Right lobe of liver (tissue), 6 donors: ENCODE measurements at regions of chr18 and their contacts with region 1.

Region 1: DNA sequence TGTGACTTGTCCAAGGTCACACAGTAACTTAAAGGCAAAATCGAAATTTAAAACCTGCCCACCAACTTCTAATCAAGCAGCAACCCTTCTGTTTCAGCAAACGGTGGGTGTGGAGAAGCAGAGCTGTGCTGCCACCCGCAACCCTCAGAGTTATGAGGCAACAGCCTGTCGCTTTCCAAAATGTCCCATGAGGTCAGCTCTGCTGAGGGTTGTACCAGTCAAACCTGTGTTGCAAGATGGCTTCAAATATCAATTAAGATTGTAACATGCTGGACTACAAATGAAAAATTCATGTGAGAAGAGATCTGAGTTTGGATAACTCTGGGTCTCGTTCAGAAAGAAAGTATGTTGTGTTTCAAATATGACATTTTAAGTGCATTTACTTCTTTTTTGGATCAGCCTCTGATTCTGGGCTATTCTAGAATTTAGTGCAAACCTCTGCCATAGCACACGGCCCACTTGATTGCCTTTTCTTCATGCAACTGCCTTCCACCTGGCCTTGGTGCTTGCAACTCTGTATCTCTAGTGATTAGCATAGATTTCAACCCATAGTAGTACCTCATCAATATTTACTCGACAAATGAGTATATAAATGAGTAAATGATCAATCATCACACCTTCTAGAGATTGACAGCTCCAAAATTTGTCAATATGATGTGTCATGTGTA is 69.3 kb downstream of the TIMM21 start:
- DNase-seq: peak; percentile 57 to 91 (median 85)
- ATAC-seq: peak; percentile 80 to 92 (median 88)
- H3K4me3 ChIP-seq: peak overlapping the region in 1 of 3 donors; percentile 3
- H3K27ac ChIP-seq: peak overlapping the region; percentile 70 to 94 (median 77)
- H3K4me1 ChIP-seq: peaks cover 0 to 29% (median 12%) of the 10 kb centered on the region in 4 donors
- H3K27me3 ChIP-seq: no peaks in the 10 kb centered on the region
- CTCF ChIP-seq: no peak
- POLR2A ChIP-seq: peak; percentile 36

Region 2: DNA sequence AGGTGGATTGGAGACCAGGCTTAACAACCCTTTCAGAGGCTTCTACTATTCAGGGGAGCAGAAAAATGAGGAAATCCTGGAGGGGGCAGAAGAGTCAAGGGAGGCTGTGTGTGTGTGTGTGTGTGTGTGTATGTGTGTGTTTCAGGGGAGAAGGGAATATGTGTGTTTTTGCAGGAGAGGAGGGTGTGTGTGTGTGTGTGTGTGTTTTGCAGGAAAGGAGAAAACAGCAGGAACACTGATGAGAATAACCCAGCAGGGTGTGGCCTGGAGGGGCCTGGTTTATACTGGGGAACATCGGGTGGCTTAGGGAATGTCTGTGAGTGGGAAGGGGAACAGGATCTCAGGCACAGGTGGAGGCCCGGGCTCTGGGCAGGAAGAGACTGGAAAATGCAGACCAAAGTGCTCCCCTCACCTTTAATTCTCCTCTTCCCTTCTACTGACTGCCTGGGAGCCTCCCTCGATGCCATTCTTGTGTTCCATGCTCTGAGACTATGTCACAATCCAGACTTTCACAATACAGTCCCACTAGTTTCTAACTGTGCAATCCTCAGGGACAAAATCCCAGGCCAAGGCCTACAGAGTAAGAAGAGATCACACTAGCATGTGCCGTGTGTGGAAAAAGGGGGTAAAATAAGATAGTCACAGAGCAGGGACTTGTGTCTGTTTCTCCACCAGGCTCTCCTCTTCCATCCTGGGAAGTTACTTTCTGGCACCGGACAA is 64.2 kb after region 1 on chr18:
- intact Hi-C with region 1: loop called in 1 of 2 experiments (anchors 10 kb)
- DNase-seq: no peak
- ATAC-seq: peak; percentile 21 to 67 (median 43)
- H3K4me3 ChIP-seq: peak overlapping the region in 2 of 3 donors; percentile 33 to 95
- H3K27ac ChIP-seq: peak overlapping the region; percentile 83 to 95 (median 89)
- H3K4me1 ChIP-seq: peaks cover 9 to 89% (median 49%) of the 10 kb centered on the region in 4 donors
- H3K27me3 ChIP-seq: no peaks in the 10 kb centered on the region
- CTCF ChIP-seq: no peak
- POLR2A ChIP-seq: no peak